MCF 10A (cell line): ENCODE measurements at regions of chr2 and their contacts with region 1.

Region 1: DNA sequence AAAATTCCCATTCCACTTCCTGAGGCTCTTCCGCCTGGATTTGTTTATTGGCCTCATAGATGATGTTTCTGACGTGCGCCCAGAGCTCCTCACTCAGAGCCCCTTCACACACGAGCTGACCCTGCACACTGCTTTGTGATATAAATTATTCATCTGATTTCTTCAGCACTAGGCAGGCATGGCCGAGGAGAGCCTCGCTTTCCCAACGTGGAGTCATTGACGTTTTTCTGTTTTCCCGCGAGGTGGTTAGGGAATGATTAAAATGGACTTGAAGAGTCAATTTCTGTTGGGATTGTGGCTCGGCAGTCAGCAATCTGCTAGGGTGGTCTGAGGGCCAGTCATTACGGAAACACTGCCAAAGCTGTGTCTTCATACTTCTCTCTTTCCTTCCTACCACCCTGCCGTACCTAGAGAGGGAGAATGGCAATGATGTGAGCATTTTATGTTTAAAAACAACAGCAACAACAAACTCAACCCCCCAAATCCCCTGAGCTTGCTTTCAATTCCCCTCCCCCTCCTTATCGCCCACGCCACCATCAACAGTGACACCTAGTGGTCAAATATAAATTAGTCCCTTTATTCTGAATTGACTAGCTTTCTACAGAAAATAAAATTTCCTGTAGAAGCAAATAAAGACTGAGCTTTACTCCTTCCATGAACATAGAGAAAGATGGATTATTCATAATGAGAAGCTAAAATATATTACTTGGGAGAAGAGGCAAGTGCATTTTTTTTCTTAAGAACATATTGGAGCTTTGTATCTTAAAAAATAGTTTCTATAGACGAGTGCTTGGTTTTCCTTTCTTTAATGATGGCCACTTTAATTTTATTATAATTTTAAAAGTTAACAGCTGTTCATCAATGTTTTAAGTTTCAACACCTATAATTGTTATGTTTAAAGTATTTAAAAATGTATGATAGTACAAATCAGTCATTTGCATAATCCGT is 285.1 kb downstream of the MTX2 start:
- DNase-seq: peak; percentile 63
- H3K4me3 Mint-ChIP-seq: peak overlapping the region; percentile 58
- H3K27ac Mint-ChIP-seq: no peak overlapping the region
- H3K4me1 Mint-ChIP-seq: peaks cover 28% of the 10 kb centered on the region
- H3K27me3 Mint-ChIP-seq: no peaks in the 10 kb centered on the region
- CTCF ChIP-seq: peak; percentile 83

Region 2: DNA sequence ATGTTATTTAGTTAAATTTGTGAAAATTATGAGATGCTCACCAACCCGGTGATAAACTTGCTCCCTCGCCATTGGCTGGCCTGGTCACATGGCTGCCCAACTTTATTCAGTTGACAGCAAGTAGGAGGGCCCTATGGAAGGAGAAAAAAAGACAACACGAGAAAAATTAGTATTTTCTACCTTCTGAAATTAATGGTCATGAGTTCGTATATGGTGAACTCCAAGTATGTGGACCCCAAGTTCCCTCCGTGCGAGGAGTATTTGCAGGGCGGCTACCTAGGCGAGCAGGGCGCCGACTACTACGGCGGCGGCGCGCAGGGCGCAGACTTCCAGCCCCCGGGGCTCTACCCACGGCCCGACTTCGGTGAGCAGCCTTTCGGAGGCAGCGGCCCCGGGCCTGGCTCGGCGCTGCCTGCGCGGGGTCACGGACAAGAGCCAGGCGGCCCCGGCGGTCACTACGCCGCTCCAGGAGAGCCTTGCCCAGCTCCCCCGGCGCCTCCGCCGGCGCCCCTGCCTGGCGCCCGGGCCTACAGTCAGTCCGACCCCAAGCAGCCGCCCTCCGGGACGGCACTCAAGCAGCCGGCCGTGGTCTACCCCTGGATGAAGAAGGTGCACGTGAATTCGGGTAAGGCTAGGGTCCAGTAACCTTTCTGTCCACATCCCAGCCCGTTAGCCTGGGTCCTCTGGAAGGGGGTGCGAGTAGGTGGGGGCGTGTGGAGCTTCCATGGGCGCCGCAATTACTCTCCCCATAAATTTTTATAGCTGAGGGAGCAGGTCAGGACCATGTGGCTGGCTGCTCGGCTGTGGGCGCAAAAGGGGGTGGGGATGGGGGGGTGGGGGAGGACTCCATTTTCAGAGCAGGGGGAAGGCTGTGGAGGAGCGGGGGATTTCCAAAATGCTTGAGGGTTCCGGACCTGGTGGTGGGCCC is 402.7 kb before region 1 on chr2 and contains the start of gene HOXD4:
- CTCF ChIA-PET with region 1: interaction called, 175 read pairs
- POLR2A ChIA-PET with region 1: no interaction called
- intact Hi-C with region 1: no loop called
- DNase-seq: no peak
- H3K4me3 Mint-ChIP-seq: no peak within 1 kb of the TSS
- H3K27ac Mint-ChIP-seq: no peak within 1 kb of the TSS
- H3K4me1 Mint-ChIP-seq: no peaks in the 10 kb centered on the region
- H3K27me3 Mint-ChIP-seq: no peaks in the 10 kb centered on the region
- CTCF ChIP-seq: no peak
- total RNA-seq, gene HOXD4: not detected in 2 replicates

Region 3: GRCh38 chr2:176338395-176338794 is 216.0 kb before region 1 on chr2:
- CTCF ChIA-PET with region 1: interaction called, 4 read pairs
- POLR2A ChIA-PET with region 1: no interaction called
- intact Hi-C with region 1: loop called (anchors 5 kb)
- DNase-seq: no peak
- H3K4me3 Mint-ChIP-seq: no peak overlapping the region
- H3K27ac Mint-ChIP-seq: no peak overlapping the region
- H3K4me1 Mint-ChIP-seq: no peaks in the 10 kb centered on the region
- H3K27me3 Mint-ChIP-seq: no peaks in the 10 kb centered on the region
- CTCF ChIP-seq: no peak

Region 4: DNA sequence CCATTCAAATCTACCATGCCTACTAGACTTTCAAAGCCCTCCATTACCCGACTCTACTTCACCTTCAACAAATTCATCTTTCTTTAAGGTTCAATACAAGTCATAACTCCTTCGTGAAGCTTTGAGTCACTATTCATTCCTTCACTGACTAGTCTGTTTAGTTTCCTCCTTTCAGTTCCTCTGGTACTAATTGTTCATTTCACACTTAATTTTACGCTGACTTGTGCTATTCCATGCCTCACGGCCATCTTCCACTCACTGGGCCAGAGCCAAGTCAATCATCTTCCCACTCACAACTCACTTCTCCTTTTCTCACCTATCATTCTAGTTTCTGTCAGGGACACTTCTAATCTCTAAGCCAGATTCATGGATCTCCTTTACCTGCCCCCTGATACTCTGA is 148.9 kb before region 1 on chr2:
- CTCF ChIA-PET with region 1: no interaction called
- POLR2A ChIA-PET with region 1: no interaction called
- intact Hi-C with region 1: no loop called
- DNase-seq: no peak
- H3K4me3 Mint-ChIP-seq: no peak overlapping the region
- H3K27ac Mint-ChIP-seq: no peak overlapping the region
- H3K4me1 Mint-ChIP-seq: no peaks in the 10 kb centered on the region
- H3K27me3 Mint-ChIP-seq: peaks cover 26% of the 10 kb centered on the region
- CTCF ChIP-seq: no peak

Region 5: DNA sequence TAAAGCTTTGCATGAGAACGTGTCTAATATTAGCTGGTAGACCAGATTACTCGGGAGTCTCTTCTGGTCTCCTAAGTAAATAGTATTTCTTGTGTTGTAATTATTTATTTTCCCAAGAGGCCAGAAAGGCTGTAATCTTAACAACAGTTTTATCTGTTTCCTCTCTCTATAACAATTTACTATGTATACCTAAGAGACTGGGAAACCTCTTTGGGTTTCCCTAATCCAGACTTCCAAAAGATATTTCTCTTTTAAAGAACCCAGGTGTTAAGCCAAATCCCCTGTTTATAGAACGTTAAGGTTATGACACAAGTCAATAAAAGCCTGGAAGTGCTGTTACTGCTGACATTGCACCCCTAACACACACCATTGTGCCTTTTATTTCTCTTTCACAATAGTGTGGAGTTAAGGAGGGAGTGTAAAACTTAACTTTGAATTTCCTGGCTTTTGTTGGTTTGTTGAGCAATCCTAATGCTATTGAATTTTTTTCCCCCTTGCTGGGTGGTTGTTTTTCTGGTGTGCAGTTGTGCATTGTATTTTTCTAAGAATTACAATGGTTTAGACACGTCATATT is 92.5 kb before region 1 on chr2:
- CTCF ChIA-PET with region 1: interaction called, 72 read pairs
- POLR2A ChIA-PET with region 1: interaction called, 6 read pairs
- intact Hi-C with region 1: no loop called
- DNase-seq: peak; percentile 73
- H3K4me3 Mint-ChIP-seq: no peak overlapping the region
- H3K27ac Mint-ChIP-seq: no peak overlapping the region
- H3K4me1 Mint-ChIP-seq: peaks cover 16% of the 10 kb centered on the region
- H3K27me3 Mint-ChIP-seq: no peaks in the 10 kb centered on the region
- CTCF ChIP-seq: no peak

Region 6: DNA sequence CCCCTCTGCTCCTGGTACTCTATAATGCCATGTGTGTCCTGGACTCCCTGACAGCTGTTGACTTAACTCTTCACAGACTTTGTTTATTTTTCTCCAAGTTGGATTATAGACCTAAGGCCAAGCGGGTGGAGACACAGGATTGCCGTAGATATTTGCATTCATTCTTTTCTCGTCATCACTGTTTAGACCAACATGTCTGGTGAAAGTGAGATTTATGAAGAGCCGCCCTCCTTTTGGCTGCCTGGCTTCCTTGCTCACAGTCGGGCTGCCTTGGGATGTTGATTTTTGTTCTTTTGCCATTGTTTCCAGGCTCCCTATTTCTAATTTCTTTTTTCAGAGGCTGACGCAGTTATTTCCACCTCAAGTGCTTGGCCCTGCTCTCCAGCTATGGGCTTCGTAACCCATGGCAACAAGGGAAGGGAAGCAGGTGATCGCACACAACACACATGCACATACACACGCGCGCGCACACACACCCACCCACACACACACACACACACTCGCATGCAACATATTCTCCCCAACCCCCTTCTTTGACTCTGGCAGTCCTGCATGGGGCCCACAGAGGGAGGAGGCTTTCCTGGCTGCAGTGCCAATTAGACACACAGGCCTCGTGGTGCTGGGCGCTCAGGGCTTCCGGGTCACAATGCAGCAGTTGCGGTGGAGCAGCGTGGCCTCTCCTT is 11.4 kb after region 1 on chr2:
- CTCF ChIA-PET with region 1: interaction called, 23 read pairs
- POLR2A ChIA-PET with region 1: no interaction called
- intact Hi-C with region 1: no loop called
- DNase-seq: no peak
- H3K4me3 Mint-ChIP-seq: no peak overlapping the region
- H3K27ac Mint-ChIP-seq: no peak overlapping the region
- H3K4me1 Mint-ChIP-seq: peaks cover 11% of the 10 kb centered on the region
- H3K27me3 Mint-ChIP-seq: no peaks in the 10 kb centered on the region
- CTCF ChIP-seq: no peak

Region 7: GRCh38 chr2:176763851-176764404 is 209.6 kb after region 1 on chr2:
- CTCF ChIA-PET with region 1: no interaction called
- POLR2A ChIA-PET with region 1: no interaction called
- intact Hi-C with region 1: no loop called
- DNase-seq: no peak
- H3K4me3 Mint-ChIP-seq: no peak overlapping the region
- H3K27ac Mint-ChIP-seq: no peak overlapping the region
- H3K4me1 Mint-ChIP-seq: no peaks in the 10 kb centered on the region
- H3K27me3 Mint-ChIP-seq: peaks cover 68% of the 10 kb centered on the region
- CTCF ChIP-seq: no peak

Region 8: GRCh38 chr2:177148477-177149154 is 594.2 kb after region 1 on chr2:
- CTCF ChIA-PET with region 1: interaction called, 7 read pairs
- POLR2A ChIA-PET with region 1: no interaction called
- intact Hi-C with region 1: loop called (anchors 5 kb)
- DNase-seq: peak; percentile 84
- H3K4me3 Mint-ChIP-seq: peak overlapping the region; percentile 70
- H3K27ac Mint-ChIP-seq: no peak overlapping the region
- H3K4me1 Mint-ChIP-seq: peaks cover 15% of the 10 kb centered on the region
- H3K27me3 Mint-ChIP-seq: peaks cover 66% of the 10 kb centered on the region
- CTCF ChIP-seq: peak; percentile 70

Region 9: DNA sequence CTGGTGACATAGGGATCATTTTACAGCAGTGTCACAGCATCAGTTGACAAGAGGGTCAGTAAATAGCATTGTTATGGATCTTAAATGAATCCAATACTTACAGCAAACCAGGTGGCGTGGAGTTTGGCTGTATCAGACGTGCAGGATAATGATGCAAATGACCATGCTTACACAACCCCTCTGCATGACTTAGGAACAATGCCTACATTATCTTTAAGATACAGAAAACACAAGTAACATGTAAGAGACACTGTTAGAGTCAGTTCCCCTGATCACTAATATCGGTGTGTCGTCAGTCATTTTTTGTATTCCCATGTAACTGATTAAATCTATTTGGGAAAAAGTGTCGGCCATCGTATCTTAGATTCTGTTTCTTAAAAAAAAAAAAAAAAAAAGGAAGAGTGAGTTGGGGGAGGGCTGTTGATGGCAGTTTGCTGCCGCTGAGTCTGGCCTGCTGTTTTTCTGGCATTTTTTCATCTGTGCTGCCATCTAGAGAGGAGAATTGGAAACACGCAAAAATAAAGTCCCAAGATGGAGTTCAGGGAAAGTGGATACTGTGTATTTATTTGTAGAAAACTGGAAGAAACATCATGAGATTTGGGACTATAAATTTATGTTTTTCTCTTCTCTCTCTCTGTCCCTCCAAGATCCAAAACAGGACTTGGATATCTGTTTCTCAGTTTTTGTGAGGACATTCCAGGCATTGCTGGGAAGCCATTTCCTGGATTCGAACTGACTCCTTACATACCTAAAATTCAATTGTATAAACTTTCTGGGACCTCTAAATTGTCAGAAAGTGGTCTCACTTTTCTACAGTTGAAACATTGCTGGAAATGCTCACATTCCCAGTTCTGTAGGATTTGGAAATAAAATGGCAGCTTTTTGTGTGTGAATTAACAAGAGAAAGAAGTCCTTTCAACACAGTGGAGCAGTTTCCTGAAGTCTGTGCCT is 777.9 kb after region 1 on chr2:
- CTCF ChIA-PET with region 1: no interaction called
- POLR2A ChIA-PET with region 1: no interaction called
- intact Hi-C with region 1: no loop called
- DNase-seq: peak; percentile 73
- H3K4me3 Mint-ChIP-seq: no peak overlapping the region
- H3K27ac Mint-ChIP-seq: no peak overlapping the region
- H3K4me1 Mint-ChIP-seq: peaks cover 8% of the 10 kb centered on the region
- H3K27me3 Mint-ChIP-seq: no peaks in the 10 kb centered on the region
- CTCF ChIP-seq: peak; percentile 60